Activated CD4-positive, alpha-beta T cell treated with anti-CD3 and anti-CD28 coated beads, Interleukin-2, amount 10 ng/mL, durations not matched to agents 24 days and 14 days (primary cell): ENCODE measurements at regions of chr6 and their contacts with region 1.

Region 1: DNA sequence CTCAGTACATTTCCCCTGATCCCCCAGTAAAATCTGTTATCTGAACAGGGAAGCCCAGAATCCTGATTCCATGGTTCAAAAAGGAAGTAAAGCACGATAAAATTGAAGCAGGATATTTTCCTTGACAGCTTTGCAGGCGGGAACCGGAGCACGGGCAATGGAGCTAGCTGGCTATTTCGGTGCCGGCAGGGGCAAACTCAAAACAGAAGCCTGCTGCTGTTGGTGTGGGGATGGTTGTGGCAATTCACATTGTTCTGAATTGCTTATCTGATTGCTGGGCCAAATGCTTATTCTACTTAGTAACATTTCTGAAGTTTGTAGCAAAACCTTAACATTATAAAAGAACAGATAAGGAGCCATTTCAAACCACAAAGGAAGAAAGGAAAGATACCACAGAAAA is 172.4 kb downstream of the MMS22L start:
- DNase-seq: no peak
- H3K4me3 Mint-ChIP-seq: no peak overlapping the region
- H3K27ac Mint-ChIP-seq: no peak overlapping the region
- H3K4me1 Mint-ChIP-seq: peaks cover 15% of the 10 kb centered on the region
- H3K27me3 Mint-ChIP-seq: no peaks in the 10 kb centered on the region

Region 2: GRCh38 chr6:97077380-97077779 is 33.2 kb before region 1 on chr6:
- intact Hi-C with region 1: loop called (anchors 5 kb)
- DNase-seq: peak; percentile 24
- H3K4me3 Mint-ChIP-seq: no peak overlapping the region
- H3K27ac Mint-ChIP-seq: no peak overlapping the region
- H3K4me1 Mint-ChIP-seq: peaks cover 14% of the 10 kb centered on the region
- H3K27me3 Mint-ChIP-seq: no peaks in the 10 kb centered on the region

Region 3: DNA sequence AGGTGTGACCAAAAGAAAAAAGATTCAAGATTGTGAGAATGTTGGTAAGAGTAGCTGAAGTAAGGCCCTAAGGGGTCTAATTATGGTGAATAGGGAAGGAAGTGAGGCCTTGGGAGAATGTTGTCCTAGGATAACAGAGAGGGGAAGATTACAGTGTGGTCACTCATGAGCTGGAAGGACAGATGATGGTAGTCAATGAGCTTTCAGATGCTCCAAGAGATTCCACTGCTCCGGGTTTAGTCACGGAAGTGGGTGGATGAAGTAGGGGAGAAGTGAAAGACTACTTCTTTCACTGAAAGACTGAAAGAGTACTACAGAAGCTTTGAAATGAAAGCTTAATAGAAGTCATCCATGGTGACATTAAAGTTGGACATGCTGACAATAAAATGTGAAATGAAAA is 63.8 kb after region 1 on chr6:
- intact Hi-C with region 1: no loop called
- DNase-seq: no peak
- H3K4me3 Mint-ChIP-seq: no peak overlapping the region
- H3K27ac Mint-ChIP-seq: no peak overlapping the region
- H3K4me1 Mint-ChIP-seq: peaks cover 1% of the 10 kb centered on the region
- H3K27me3 Mint-ChIP-seq: no peaks in the 10 kb centered on the region

Region 4: GRCh38 chr6:98254624-98255023 is 1144.0 kb after region 1 on chr6:
- intact Hi-C with region 1: no loop called
- DNase-seq: no peak
- H3K4me3 Mint-ChIP-seq: no peak overlapping the region
- H3K27ac Mint-ChIP-seq: no peak overlapping the region
- H3K4me1 Mint-ChIP-seq: no peaks in the 10 kb centered on the region
- H3K27me3 Mint-ChIP-seq: no peaks in the 10 kb centered on the region